Heart left ventricle (tissue), 16 donors: ENCODE measurements at regions of chr12 and their contacts with region 1.

Region 1: DNA sequence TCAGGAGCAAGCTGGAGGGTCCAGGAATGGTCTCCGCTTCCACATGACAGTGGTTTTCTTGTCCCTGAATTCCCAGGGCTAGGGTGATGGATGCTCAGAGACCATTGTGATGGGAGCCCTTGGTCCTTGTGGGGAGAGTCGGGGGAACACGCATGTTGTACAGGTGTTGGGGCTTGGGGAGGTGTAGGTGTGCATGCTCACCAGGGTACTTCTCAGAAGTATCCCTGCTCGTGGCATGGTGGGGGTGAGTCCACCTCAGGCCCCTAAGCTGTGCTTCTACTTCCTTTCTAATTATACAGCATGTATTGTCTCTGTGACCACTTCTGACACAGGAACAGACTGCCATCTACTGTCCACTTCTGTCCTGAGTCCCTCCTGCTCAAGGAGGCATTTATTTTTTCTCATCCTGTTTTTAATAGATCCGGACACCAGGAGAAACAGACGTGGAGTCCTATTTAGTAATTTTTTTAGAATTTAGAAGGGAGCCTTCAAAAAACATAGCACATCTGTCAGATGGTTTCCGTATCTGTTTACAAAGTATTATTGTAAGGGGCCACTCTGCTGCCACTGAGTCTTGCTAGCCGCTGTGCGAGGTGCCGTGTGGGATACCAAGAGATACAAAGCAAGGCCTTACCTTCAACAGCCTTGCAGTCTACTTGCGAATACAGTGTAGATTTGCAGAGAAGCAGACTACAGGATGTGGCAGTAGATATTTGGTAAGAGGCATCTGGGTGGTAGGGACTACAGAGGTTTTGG is 10.5 kb downstream of the NTF3 start:
- DNase-seq: peak in 1 of 5 donors; percentile 47
- ATAC-seq: peak; percentile 80 to 91 (median 84)
- H3K4me3 ChIP-seq: no peak overlapping the region
- H3K27ac ChIP-seq: no peak overlapping the region
- H3K4me1 ChIP-seq: peaks cover 0 to 31% (median 8%) of the 10 kb centered on the region in 12 donors
- H3K27me3 ChIP-seq: peaks cover 0 to 5% (median 0%) of the 10 kb centered on the region in 9 donors
- CTCF ChIP-seq: peak; percentile 55 to 84 (median 70)
- POLR2A ChIP-seq: no peak

Region 2: GRCh38 chr12:5013266-5013730 is 429.1 kb before region 1 on chr12:
- intact Hi-C with region 1: loop called in 2 of 10 experiments (anchors 5 to 10 kb)
- DNase-seq: no peak
- ATAC-seq: no peak
- H3K4me3 ChIP-seq: no peak overlapping the region
- H3K27ac ChIP-seq: no peak overlapping the region
- H3K4me1 ChIP-seq: peaks cover 0 to 10% (median 0%) of the 10 kb centered on the region in 12 donors
- H3K27me3 ChIP-seq: no peaks in the 10 kb centered on the region
- CTCF ChIP-seq: no peak
- POLR2A ChIP-seq: no peak

Region 3: GRCh38 chr12:5096241-5096935 is 346.0 kb before region 1 on chr12:
- intact Hi-C with region 1: loop called in 6 of 10 experiments (anchors 2 to 10 kb)
- DNase-seq: no peak
- ATAC-seq: peak in 2 of 4 donors; percentile 24 to 49
- H3K4me3 ChIP-seq: no peak overlapping the region
- H3K27ac ChIP-seq: no peak overlapping the region
- H3K4me1 ChIP-seq: peaks cover 0 to 2% (median 0%) of the 10 kb centered on the region in 12 donors
- H3K27me3 ChIP-seq: peaks cover 0 to 21% (median 0%) of the 10 kb centered on the region in 9 donors
- CTCF ChIP-seq: peak in 2 of 12 donors; percentile 9 to 12
- POLR2A ChIP-seq: no peak

Region 4: DNA sequence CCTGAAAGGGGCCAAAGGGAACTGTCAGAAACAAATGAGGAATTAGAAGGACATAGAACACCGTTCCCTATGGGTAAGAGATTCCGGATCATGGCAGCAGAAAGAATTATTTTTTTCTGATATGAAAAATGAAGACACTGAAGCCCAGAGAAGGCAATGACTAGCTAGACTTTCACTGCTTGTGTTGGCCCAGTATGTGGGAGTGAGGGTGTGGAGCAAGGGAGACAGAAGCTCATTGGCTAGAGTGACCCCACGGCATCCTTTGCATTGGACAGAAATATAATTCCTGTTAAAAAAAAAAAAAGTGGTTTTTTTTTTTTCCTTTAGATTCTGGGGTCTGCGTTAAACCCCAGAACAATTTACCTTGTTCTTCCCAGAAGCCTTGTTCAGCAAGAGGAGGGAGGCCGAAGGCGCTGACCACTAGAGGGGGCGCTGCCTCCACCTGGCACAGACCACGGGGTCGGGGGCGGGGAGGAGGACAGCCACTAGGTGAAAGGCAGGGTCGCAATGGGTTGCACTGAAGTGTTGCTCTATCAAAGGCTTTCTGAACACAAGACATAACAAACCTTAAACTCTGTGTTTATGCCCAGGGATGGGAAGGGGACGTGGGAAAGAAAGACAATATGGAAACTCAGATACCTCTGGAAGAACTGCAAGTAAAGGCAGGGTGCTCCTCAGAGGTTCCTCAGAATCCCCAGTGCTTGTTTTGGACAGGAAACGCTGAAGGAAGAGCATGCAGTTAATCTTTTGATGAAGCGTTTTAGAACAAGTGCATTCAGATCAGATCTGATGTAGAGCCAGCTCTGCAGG is 241.9 kb before region 1 on chr12:
- intact Hi-C with region 1: loop called (anchors 1 to 5 kb)
- DNase-seq: peak; percentile 38 to 77 (median 44)
- ATAC-seq: peak in 3 of 4 donors; percentile 71 to 81 (median 76)
- H3K4me3 ChIP-seq: no peak overlapping the region
- H3K27ac ChIP-seq: no peak overlapping the region
- H3K4me1 ChIP-seq: peaks cover 0 to 7% (median 0%) of the 10 kb centered on the region in 12 donors
- H3K27me3 ChIP-seq: peaks cover 0 to 20% (median 0%) of the 10 kb centered on the region in 9 donors
- CTCF ChIP-seq: peak; percentile 51 to 80 (median 71)
- POLR2A ChIP-seq: no peak

Region 5: GRCh38 chr12:5417500-5417899 is 24.9 kb before region 1 on chr12:
- intact Hi-C with region 1: no loop called
- DNase-seq: no peak
- ATAC-seq: no peak
- H3K4me3 ChIP-seq: no peak overlapping the region
- H3K27ac ChIP-seq: no peak overlapping the region
- H3K4me1 ChIP-seq: no peaks in the 10 kb centered on the region
- H3K27me3 ChIP-seq: peaks cover 0 to 24% (median 0%) of the 10 kb centered on the region in 9 donors
- CTCF ChIP-seq: no peak
- POLR2A ChIP-seq: no peak